B cell (primary cell): ENCODE measurements at regions of chr2 and their contacts with region 1.

Region 1: GRCh38 chr2:10408649-10409579 is 39.2 kb downstream of the ODC1 start:
- DNase-seq: peak; percentile 90
- ATAC-seq: peak; percentile 68
- H3K4me3 ChIP-seq: peak overlapping the region; percentile 4 to 42 (median 10)
- H3K4me3 Mint-ChIP-seq: peak overlapping the region; percentile 86
- H3K27ac ChIP-seq: peak overlapping the region; percentile 68 to 77
- H3K27ac Mint-ChIP-seq: peak overlapping the region; percentile 86
- H3K4me1 ChIP-seq: peaks cover 54 to 76% of the 10 kb centered on the region in 2 donors
- H3K4me1 Mint-ChIP-seq: peaks cover 67% of the 10 kb centered on the region
- H3K27me3 ChIP-seq: no peaks in the 10 kb centered on the region
- H3K27me3 Mint-ChIP-seq: no peaks in the 10 kb centered on the region
- CTCF ChIP-seq: peak; percentile 93

Region 2: DNA sequence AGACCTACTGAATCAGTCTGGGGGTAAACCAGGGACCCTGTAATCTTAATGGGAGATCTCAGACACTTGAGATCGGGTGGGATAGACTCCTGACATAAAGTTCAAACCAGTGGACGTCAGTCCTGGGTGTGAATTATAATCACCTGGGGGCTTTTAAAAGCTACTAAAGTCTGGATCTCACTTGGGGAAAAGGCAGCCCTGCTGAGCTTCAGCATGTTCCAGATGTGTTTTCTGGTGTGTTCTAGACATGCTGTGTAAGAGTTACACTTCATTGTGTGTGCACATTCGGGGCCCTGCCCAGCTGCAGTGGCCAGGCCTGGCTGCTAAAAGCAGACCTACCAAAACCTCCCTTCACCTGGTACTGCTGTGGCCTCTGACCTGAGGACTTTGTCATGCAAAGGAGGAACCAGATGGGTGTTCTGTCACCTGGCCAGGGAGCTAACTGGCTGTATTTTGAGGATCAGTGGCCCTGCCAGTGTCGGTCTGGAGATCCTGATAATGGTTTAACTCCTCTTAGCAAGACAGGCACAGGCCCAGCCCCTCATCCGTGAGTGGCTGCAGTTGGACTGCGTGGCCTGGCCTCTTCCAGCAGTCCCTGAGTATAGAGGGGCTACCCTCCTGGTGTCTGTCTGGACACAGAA is 275.8 kb before region 1 on chr2:
- CTCF ChIA-PET with region 1: interaction called, 15 read pairs
- POLR2A ChIA-PET with region 1: no interaction called
- intact Hi-C with region 1: no loop called
- DNase-seq: peak; percentile 3
- ATAC-seq: no peak
- H3K4me3 ChIP-seq: no peak overlapping the region
- H3K4me3 Mint-ChIP-seq: no peak overlapping the region
- H3K27ac ChIP-seq: no peak overlapping the region
- H3K27ac Mint-ChIP-seq: no peak overlapping the region
- H3K4me1 ChIP-seq: no peaks in the 10 kb centered on the region
- H3K4me1 Mint-ChIP-seq: no peaks in the 10 kb centered on the region
- H3K27me3 ChIP-seq: no peaks in the 10 kb centered on the region
- H3K27me3 Mint-ChIP-seq: no peaks in the 10 kb centered on the region
- CTCF ChIP-seq: no peak

Region 3: DNA sequence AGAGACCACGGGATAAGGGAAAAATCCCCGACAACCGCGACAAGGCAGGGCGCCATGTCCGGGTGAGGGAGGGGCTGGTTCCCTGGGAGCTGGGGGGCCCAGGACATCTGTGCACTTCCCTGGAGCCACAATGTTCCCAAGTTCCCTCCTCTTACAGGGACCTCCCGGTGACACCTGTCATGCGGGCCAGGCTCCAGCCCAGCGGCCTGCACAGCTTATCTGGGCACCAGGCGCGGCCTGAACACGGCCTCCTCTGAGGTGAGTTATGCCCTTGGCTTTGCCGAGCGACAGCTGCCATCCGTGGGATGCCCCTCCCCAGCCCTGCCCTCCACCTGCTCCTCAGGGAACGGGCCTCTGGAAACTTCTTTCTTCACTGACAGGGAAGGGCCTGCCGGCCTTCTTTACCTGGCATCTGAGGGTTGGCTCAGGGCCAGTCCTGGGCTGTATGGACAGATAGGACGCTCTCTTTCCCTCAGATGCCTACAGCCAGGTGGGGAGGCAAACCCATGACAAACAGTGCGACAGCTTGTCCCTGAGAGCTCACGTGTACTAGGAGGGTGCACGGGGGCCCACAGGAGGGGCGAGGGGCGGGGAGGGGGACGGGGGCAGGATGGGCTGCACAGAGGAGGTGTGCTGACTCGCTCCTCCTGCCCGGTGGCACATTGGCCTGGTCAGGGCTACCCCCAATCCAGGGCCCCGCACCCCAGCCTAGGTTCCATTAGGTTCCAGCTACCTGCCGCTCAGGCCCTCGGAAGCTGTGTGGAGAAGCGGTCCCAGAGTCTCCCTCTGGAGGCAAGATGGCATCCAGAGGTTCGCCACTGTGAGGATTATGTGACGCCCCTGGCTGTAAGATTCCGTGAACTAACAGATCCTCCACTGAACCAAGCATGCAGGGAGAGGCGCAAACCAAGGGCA is 141.1 kb before region 1 on chr2:
- CTCF ChIA-PET with region 1: interaction called, 83 read pairs
- POLR2A ChIA-PET with region 1: interaction called, 11 read pairs
- intact Hi-C with region 1: no loop called
- DNase-seq: no peak
- ATAC-seq: no peak
- H3K4me3 ChIP-seq: no peak overlapping the region
- H3K4me3 Mint-ChIP-seq: no peak overlapping the region
- H3K27ac ChIP-seq: no peak overlapping the region
- H3K27ac Mint-ChIP-seq: no peak overlapping the region
- H3K4me1 ChIP-seq: peaks cover 3 to 8% of the 10 kb centered on the region in 2 donors
- H3K4me1 Mint-ChIP-seq: peaks cover 3% of the 10 kb centered on the region
- H3K27me3 ChIP-seq: no peaks in the 10 kb centered on the region
- H3K27me3 Mint-ChIP-seq: peaks cover 4% of the 10 kb centered on the region
- CTCF ChIP-seq: no peak

Region 4: GRCh38 chr2:10316336-10316735 is 92.6 kb before region 1 on chr2:
- CTCF ChIA-PET with region 1: interaction called, 14 read pairs
- POLR2A ChIA-PET with region 1: no interaction called
- intact Hi-C with region 1: no loop called
- DNase-seq: no peak
- ATAC-seq: no peak
- H3K4me3 ChIP-seq: no peak overlapping the region
- H3K4me3 Mint-ChIP-seq: no peak overlapping the region
- H3K27ac ChIP-seq: no peak overlapping the region
- H3K27ac Mint-ChIP-seq: peak overlapping the region; percentile 39
- H3K4me1 ChIP-seq: no peaks in the 10 kb centered on the region
- H3K4me1 Mint-ChIP-seq: peaks cover 25% of the 10 kb centered on the region
- H3K27me3 ChIP-seq: no peaks in the 10 kb centered on the region
- H3K27me3 Mint-ChIP-seq: no peaks in the 10 kb centered on the region
- CTCF ChIP-seq: no peak

Region 5: GRCh38 chr2:10360851-10361588 is 47.9 kb before region 1 on chr2:
- CTCF ChIA-PET with region 1: interaction called, 15 read pairs
- POLR2A ChIA-PET with region 1: no interaction called
- intact Hi-C with region 1: no loop called
- DNase-seq: no peak
- ATAC-seq: no peak
- H3K4me3 ChIP-seq: no peak overlapping the region
- H3K4me3 Mint-ChIP-seq: no peak overlapping the region
- H3K27ac ChIP-seq: no peak overlapping the region
- H3K27ac Mint-ChIP-seq: no peak overlapping the region
- H3K4me1 ChIP-seq: no peaks in the 10 kb centered on the region
- H3K4me1 Mint-ChIP-seq: peaks cover 14% of the 10 kb centered on the region
- H3K27me3 ChIP-seq: no peaks in the 10 kb centered on the region
- H3K27me3 Mint-ChIP-seq: no peaks in the 10 kb centered on the region
- CTCF ChIP-seq: no peak

Region 6: GRCh38 chr2:10389573-10389972 is 19.3 kb before region 1 on chr2:
- CTCF ChIA-PET with region 1: interaction called, 178 read pairs
- POLR2A ChIA-PET with region 1: interaction called, 72 read pairs
- intact Hi-C with region 1: no loop called
- DNase-seq: no peak
- ATAC-seq: no peak
- H3K4me3 ChIP-seq: no peak overlapping the region
- H3K4me3 Mint-ChIP-seq: no peak overlapping the region
- H3K27ac ChIP-seq: no peak overlapping the region
- H3K27ac Mint-ChIP-seq: no peak overlapping the region
- H3K4me1 ChIP-seq: peaks cover under 1 to 39% of the 10 kb centered on the region in 2 donors
- H3K4me1 Mint-ChIP-seq: peaks cover 53% of the 10 kb centered on the region
- H3K27me3 ChIP-seq: no peaks in the 10 kb centered on the region
- H3K27me3 Mint-ChIP-seq: no peaks in the 10 kb centered on the region
- CTCF ChIP-seq: no peak

Region 7: GRCh38 chr2:10448208-10448645 is 39.3 kb after region 1 on chr2 and contains the start of gene ODC1:
- CTCF ChIA-PET with region 1: interaction called, 41 read pairs
- POLR2A ChIA-PET with region 1: interaction called, 34 read pairs
- intact Hi-C with region 1: loop called (anchors 1 kb)
- DNase-seq: peak; percentile 98
- ATAC-seq: peak; percentile 80
- H3K4me3 ChIP-seq: peak within 1 kb of the TSS; percentile 58 to 87 (median 63)
- H3K4me3 Mint-ChIP-seq: peak within 1 kb of the TSS; percentile 91
- H3K27ac ChIP-seq: peak within 1 kb of the TSS; percentile 94 to 97
- H3K27ac Mint-ChIP-seq: peak within 1 kb of the TSS; percentile 85
- H3K4me1 ChIP-seq: peaks cover 44 to 55% of the 10 kb centered on the region in 2 donors
- H3K4me1 Mint-ChIP-seq: peaks cover 38% of the 10 kb centered on the region
- H3K27me3 ChIP-seq: no peaks in the 10 kb centered on the region
- H3K27me3 Mint-ChIP-seq: no peaks in the 10 kb centered on the region
- CTCF ChIP-seq: no peak
- total RNA-seq, gene ODC1: 88.7 and 92.1 TPM in 2 replicates

Region 8: GRCh38 chr2:10678222-10678621 is 269.3 kb after region 1 on chr2:
- CTCF ChIA-PET with region 1: no interaction called
- POLR2A ChIA-PET with region 1: no interaction called
- intact Hi-C with region 1: no loop called
- DNase-seq: no peak
- ATAC-seq: no peak
- H3K4me3 ChIP-seq: no peak overlapping the region
- H3K4me3 Mint-ChIP-seq: no peak overlapping the region
- H3K27ac ChIP-seq: no peak overlapping the region
- H3K27ac Mint-ChIP-seq: no peak overlapping the region
- H3K4me1 ChIP-seq: no peaks in the 10 kb centered on the region
- H3K4me1 Mint-ChIP-seq: peaks cover 1% of the 10 kb centered on the region
- H3K27me3 ChIP-seq: no peaks in the 10 kb centered on the region
- H3K27me3 Mint-ChIP-seq: no peaks in the 10 kb centered on the region
- CTCF ChIP-seq: peak; percentile 41